Activated CD8-positive, alpha-beta memory T cell treated with anti-CD3 and anti-CD28 coated beads, Interleukin-2, amount 10 ng/mL, durations not matched to agents 7 days and 5 days (primary cell): ENCODE measurements at regions of chr15 and their contacts with region 1.

Region 1: GRCh38 chr15:77909182-77909940 is 168.2 kb downstream of the TBC1D2B start:
- DNase-seq: no peak
- ATAC-seq: no peak
- H3K4me3 Mint-ChIP-seq: no peak overlapping the region
- H3K27ac Mint-ChIP-seq: no peak overlapping the region
- H3K4me1 Mint-ChIP-seq: peaks cover 3% of the 10 kb centered on the region
- H3K27me3 Mint-ChIP-seq: peaks cover 14% of the 10 kb centered on the region

Region 2: GRCh38 chr15:77870195-77871065 is 38.9 kb before region 1 on chr15:
- CTCF ChIA-PET with region 1: no interaction called
- DNase-seq: peak; percentile 68
- ATAC-seq: peak; percentile 51
- H3K4me3 Mint-ChIP-seq: no peak overlapping the region
- H3K27ac Mint-ChIP-seq: no peak overlapping the region
- H3K4me1 Mint-ChIP-seq: no peaks in the 10 kb centered on the region
- H3K27me3 Mint-ChIP-seq: peaks cover 5% of the 10 kb centered on the region

Region 3: GRCh38 chr15:77959432-77959879 is 50.1 kb after region 1 on chr15:
- CTCF ChIA-PET with region 1: interaction called, 12 read pairs
- DNase-seq: peak; percentile 86
- ATAC-seq: peak; percentile 98
- H3K4me3 Mint-ChIP-seq: peak overlapping the region; percentile 63
- H3K27ac Mint-ChIP-seq: no peak overlapping the region
- H3K4me1 Mint-ChIP-seq: peaks cover 27% of the 10 kb centered on the region
- H3K27me3 Mint-ChIP-seq: peaks cover 52% of the 10 kb centered on the region